ENCODE measurements at regions of chr6 and their contacts with region 1.

Region 1: DNA sequence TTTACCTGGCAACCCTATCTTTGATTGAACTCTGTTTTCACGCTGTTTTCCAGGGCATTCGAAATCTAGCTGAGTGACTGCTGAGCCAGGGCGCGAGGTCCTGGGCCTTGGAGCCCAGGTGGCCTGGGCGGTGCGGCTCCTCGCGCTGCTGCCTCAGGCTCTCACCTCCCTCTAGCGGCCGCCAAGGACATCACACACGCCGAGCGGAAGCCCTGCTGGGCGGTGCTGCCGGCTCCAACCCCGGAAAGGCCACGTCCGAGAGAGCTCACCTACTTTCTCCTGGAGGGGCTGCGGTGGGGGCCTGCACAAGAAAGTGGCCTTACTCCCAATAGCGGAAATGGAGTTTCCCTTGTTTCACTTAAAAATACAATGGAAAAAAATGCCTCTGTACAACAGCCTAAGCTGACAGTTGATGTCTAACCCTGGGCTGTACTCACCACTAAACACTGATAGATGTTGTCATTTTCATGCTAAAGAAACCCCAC is 77.7 kb downstream of the ELOVL4 start:
- H3K4me3 ChIP-seq: no peak overlapping the region
- H3K27ac ChIP-seq: no peak overlapping the region
- H3K4me1 ChIP-seq: no peaks in the 10 kb centered on the region
- CTCF ChIP-seq: peak; percentile 86

Region 2: GRCh38 chr6:79494841-79495240 is 374.8 kb before region 1 on chr6:
- CTCF ChIA-PET with region 1: no interaction called
- POLR2A ChIA-PET with region 1: no interaction called
- H3K4me3 ChIP-seq: no peak overlapping the region
- H3K27ac ChIP-seq: no peak overlapping the region
- H3K4me1 ChIP-seq: no peaks in the 10 kb centered on the region
- CTCF ChIP-seq: no peak

Region 3: GRCh38 chr6:79536954-79537747 is 332.5 kb before region 1 on chr6 and contains the start of gene LCA5:
- CTCF ChIA-PET with region 1: no interaction called
- POLR2A ChIA-PET with region 1: no interaction called
- H3K4me3 ChIP-seq: peak within 1 kb of the TSS; percentile 97
- H3K27ac ChIP-seq: peak within 1 kb of the TSS; percentile 75
- H3K4me1 ChIP-seq: no peaks in the 10 kb centered on the region
- CTCF ChIP-seq: no peak

Region 4: DNA sequence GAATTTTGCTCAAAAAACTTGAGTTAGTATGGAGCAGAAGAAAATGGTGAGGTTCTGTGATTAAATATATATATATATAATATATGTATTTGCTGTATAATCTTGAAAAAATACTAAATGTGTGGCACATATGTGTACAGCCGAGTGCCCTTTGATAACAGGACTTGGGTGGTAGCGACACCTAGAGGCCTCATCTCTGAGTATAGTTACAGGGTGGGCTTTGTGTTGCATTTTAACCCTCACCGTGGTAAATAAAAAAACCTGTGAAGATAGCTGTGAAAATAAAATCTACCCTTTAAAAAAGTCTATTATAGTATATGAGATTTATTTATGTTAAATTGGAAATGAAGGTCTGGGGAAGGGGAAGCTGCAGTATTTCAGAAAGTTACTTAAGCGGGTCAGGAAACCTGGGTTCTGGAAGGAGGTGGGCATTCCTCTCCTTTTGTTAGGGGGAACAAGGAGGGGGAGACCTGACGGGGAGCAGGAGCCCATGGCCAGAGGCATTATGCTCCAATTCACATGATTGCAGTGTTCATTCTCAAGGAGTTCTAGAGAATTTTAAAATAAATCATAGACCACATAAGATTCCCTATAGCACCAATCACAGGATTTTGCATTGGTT is 155.8 kb before region 1 on chr6:
- CTCF ChIA-PET with region 1: interaction called, 14 read pairs
- POLR2A ChIA-PET with region 1: no interaction called
- H3K4me3 ChIP-seq: no peak overlapping the region
- H3K27ac ChIP-seq: no peak overlapping the region
- H3K4me1 ChIP-seq: no peaks in the 10 kb centered on the region
- CTCF ChIP-seq: no peak

Region 5: DNA sequence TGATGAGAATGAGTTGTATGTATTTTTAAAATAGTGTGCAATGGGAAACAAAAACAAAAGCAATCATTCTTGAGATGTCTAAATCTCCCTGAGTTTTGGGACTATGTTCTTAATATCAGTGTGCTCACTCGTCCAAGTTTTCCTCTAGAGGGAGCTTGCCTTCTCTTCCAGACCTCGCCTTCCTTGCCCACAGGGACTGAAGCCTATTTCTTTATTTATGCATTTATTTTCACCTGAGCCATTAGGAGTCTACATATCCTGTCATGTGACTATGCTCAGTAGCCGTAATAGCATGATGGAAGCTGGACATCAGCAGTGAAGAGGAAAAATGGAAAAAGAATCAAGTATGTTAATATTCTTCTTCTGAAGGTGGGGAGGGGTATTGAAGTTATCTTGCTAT is 107.3 kb before region 1 on chr6:
- CTCF ChIA-PET with region 1: interaction called, 11 read pairs
- POLR2A ChIA-PET with region 1: no interaction called
- H3K4me3 ChIP-seq: no peak overlapping the region
- H3K27ac ChIP-seq: no peak overlapping the region
- H3K4me1 ChIP-seq: no peaks in the 10 kb centered on the region
- CTCF ChIP-seq: no peak

Region 6: GRCh38 chr6:79777713-79778579 is 91.7 kb before region 1 on chr6:
- CTCF ChIA-PET with region 1: interaction called, 47 read pairs
- POLR2A ChIA-PET with region 1: no interaction called
- H3K4me3 ChIP-seq: peak overlapping the region; percentile 20
- H3K27ac ChIP-seq: no peak overlapping the region
- H3K4me1 ChIP-seq: no peaks in the 10 kb centered on the region
- CTCF ChIP-seq: peak; percentile 93

Region 7: DNA sequence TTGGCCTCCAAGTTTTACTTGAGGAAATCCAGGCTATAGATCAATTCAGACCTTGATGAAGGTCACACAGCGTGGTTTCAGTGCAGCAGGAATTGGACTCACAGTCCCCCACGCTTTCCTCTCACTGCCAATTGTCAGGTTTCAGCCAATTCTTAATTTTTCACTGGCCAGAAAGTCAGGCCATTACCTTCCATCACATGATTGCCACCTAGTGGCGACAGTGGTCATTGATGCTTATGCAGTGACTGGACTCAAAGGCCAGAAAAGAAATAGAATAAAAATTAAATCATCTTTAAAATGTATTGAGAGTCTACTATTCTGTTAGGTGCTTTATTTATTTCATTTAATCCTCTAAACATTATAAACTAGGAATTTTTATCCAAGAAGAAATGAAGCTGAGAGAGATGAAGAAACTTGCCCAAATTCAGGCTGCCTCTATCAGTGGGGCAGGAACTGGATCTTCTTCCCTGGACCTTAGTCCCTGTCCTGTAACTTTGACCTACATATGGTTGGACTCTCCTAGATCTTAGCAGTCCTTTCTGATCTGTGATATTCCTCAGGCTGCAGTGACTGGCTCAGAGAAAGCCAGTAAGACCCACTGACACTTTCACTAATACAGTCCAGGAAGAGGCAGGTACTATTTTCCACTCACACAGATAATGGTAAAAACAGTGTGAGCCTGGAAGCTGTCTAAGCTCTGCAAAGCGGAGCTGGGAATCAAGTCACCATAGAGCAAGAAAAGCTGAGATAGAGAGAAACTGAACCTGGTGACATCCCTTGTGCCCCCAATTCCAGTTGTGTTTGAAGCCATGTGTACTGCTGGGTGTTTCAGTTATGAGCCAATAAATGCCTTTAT is 55.6 kb before region 1 on chr6:
- CTCF ChIA-PET with region 1: interaction called, 22 read pairs
- POLR2A ChIA-PET with region 1: no interaction called
- H3K4me3 ChIP-seq: no peak overlapping the region
- H3K27ac ChIP-seq: no peak overlapping the region
- H3K4me1 ChIP-seq: no peaks in the 10 kb centered on the region
- CTCF ChIP-seq: peak; percentile 53

Region 8: DNA sequence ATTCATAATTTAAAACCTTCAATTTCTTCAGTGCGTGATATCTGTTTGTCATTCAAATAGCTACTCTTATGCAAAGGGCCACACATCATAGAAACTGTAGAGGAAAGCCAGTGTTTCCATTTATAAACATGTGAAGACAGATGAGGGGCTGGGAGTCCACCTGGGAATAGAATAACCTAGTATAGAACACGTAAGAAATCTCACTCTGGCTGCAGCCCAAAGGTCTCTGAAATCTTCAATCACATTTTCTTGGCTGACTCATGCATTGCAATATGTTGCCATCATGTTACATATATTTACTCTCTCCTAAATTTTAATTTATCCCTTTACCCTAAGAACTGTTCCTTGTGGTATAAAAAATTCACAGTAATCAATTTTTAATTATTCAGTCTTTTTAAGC is 45.4 kb before region 1 on chr6:
- CTCF ChIA-PET with region 1: interaction called, 29 read pairs
- POLR2A ChIA-PET with region 1: no interaction called
- H3K4me3 ChIP-seq: no peak overlapping the region
- H3K27ac ChIP-seq: no peak overlapping the region
- H3K4me1 ChIP-seq: no peaks in the 10 kb centered on the region
- CTCF ChIP-seq: no peak

Region 9: GRCh38 chr6:79833264-79833963 is 36.2 kb before region 1 on chr6:
- CTCF ChIA-PET with region 1: interaction called, 29 read pairs
- POLR2A ChIA-PET with region 1: no interaction called
- H3K4me3 ChIP-seq: no peak overlapping the region
- H3K27ac ChIP-seq: no peak overlapping the region
- H3K4me1 ChIP-seq: peaks cover 9% of the 10 kb centered on the region
- CTCF ChIP-seq: no peak